ENCODE measurements at regions of chr16 and their contacts with region 1.

Region 1: GRCh38 chr16:4802659-4803287 is 340 bp upstream of the ROGDI start:
- DNase-seq: peak; percentile 98
- ATAC-seq: peak; percentile 92
- H3K4me3 Mint-ChIP-seq: peak overlapping the region; percentile 89
- H3K27ac Mint-ChIP-seq: peak overlapping the region; percentile 30
- H3K4me1 Mint-ChIP-seq: peaks cover 12% of the 10 kb centered on the region
- H3K27me3 Mint-ChIP-seq: no peaks in the 10 kb centered on the region

Region 2: GRCh38 chr16:4743226-4743897 is 59.4 kb before region 1 on chr16:
- POLR2A ChIA-PET with region 1: no interaction called
- DNase-seq: no peak
- ATAC-seq: no peak
- H3K4me3 Mint-ChIP-seq: peak overlapping the region; percentile 76
- H3K27ac Mint-ChIP-seq: peak overlapping the region; percentile 85
- H3K4me1 Mint-ChIP-seq: peaks cover 19% of the 10 kb centered on the region
- H3K27me3 Mint-ChIP-seq: peaks cover 4% of the 10 kb centered on the region

Region 3: GRCh38 chr16:4755687-4756086 is 47.1 kb before region 1 on chr16:
- POLR2A ChIA-PET with region 1: no interaction called
- DNase-seq: no peak
- ATAC-seq: no peak
- H3K4me3 Mint-ChIP-seq: no peak overlapping the region
- H3K27ac Mint-ChIP-seq: no peak overlapping the region
- H3K4me1 Mint-ChIP-seq: no peaks in the 10 kb centered on the region
- H3K27me3 Mint-ChIP-seq: no peaks in the 10 kb centered on the region

Region 4: GRCh38 chr16:4766874-4767628 is 35.7 kb before region 1 on chr16 and contains the start of gene ZNF500:
- POLR2A ChIA-PET with region 1: interaction called, 16 read pairs
- DNase-seq: peak; percentile 97
- ATAC-seq: peak; percentile 75
- H3K4me3 Mint-ChIP-seq: peak within 1 kb of the TSS; percentile 94
- H3K27ac Mint-ChIP-seq: peak within 1 kb of the TSS; percentile 89
- H3K4me1 Mint-ChIP-seq: peaks cover 23% of the 10 kb centered on the region
- H3K27me3 Mint-ChIP-seq: no peaks in the 10 kb centered on the region
- total RNA-seq, gene ZNF500: 22.5 to 23.8 TPM

Region 5: GRCh38 chr16:4777339-4778049 is 25.3 kb before region 1 on chr16:
- POLR2A ChIA-PET with region 1: no interaction called
- DNase-seq: no peak
- ATAC-seq: no peak
- H3K4me3 Mint-ChIP-seq: no peak overlapping the region
- H3K27ac Mint-ChIP-seq: no peak overlapping the region
- H3K4me1 Mint-ChIP-seq: no peaks in the 10 kb centered on the region
- H3K27me3 Mint-ChIP-seq: no peaks in the 10 kb centered on the region

Region 6: GRCh38 chr16:4820652-4821051 is 17.9 kb after region 1 on chr16:
- POLR2A ChIA-PET with region 1: no interaction called
- DNase-seq: no peak
- ATAC-seq: no peak
- H3K4me3 Mint-ChIP-seq: no peak overlapping the region
- H3K27ac Mint-ChIP-seq: no peak overlapping the region
- H3K4me1 Mint-ChIP-seq: no peaks in the 10 kb centered on the region
- H3K27me3 Mint-ChIP-seq: no peaks in the 10 kb centered on the region